Heart right ventricle (tissue), 16 donors: ENCODE measurements at regions of chr1 and their contacts with region 1.

Region 1: GRCh38 chr1:3410142-3410925 is 44.1 kb upstream of the ARHGEF16 start:
- DNase-seq: peak; percentile 58 to 65
- ATAC-seq: peak; percentile 65 to 88 (median 82)
- H3K4me3 ChIP-seq: no peak overlapping the region
- H3K27ac ChIP-seq: no peak overlapping the region
- H3K4me1 ChIP-seq: peaks cover 3 to 30% (median 8%) of the 10 kb centered on the region in 9 donors
- H3K27me3 ChIP-seq: no peaks in the 10 kb centered on the region
- CTCF ChIP-seq: peak; percentile 54 to 80 (median 75)

Region 2: DNA sequence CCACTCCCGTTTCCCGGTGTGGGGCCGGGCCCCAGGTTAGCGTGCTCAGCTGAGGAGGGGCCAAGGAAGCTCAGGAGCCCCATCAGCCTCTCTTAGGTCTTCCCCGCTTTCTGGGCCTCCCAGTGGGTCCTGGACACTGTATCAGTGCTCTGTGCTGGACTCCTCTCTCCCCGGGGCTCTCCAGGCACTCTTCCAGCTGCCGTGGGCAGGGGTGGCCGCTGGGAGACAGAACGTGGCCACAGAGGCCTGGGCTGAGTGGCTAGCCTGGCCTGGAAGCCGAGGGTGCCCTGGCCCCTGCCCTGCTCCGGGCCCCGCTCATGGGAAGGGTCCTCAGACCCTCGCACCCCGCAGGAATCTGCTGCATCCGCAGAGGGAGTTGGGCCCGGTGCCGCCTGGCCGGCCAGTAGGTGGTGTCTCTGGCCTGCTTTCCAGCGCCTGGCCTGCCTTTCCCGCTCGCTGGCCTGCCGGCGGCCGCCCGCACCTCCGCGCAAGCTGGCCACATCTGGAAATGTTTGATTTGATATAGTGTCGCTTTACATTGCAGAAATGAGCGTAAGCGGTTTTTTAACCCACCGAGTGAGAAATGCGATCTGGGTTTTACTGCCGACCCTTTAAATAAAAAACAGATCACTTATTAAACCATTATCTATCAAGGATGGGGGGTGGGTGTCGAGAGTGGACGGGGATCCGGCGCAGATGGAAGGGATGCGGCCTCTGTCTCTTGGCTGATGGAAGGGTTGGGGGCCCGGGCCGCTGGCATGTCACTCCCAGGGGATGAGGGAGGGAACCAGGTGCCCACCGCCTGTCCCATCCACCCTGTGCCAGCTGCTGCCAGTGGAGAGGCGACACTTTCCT is 534.4 kb before region 1 on chr1:
- intact Hi-C with region 1: loop called in 1 of 10 experiments (anchors 5 kb)
- DNase-seq: peak in 1 of 2 donors; percentile 45
- ATAC-seq: peak in 6 of 8 donors; percentile 23 to 67 (median 50)
- H3K4me3 ChIP-seq: no peak overlapping the region
- H3K27ac ChIP-seq: no peak overlapping the region
- H3K4me1 ChIP-seq: peaks cover 0 to 14% (median 0%) of the 10 kb centered on the region in 9 donors
- H3K27me3 ChIP-seq: peaks cover 0 to 62% (median 14%) of the 10 kb centered on the region in 7 donors
- CTCF ChIP-seq: peak in 8 of 9 donors; percentile 24 to 65 (median 50)

Region 3: DNA sequence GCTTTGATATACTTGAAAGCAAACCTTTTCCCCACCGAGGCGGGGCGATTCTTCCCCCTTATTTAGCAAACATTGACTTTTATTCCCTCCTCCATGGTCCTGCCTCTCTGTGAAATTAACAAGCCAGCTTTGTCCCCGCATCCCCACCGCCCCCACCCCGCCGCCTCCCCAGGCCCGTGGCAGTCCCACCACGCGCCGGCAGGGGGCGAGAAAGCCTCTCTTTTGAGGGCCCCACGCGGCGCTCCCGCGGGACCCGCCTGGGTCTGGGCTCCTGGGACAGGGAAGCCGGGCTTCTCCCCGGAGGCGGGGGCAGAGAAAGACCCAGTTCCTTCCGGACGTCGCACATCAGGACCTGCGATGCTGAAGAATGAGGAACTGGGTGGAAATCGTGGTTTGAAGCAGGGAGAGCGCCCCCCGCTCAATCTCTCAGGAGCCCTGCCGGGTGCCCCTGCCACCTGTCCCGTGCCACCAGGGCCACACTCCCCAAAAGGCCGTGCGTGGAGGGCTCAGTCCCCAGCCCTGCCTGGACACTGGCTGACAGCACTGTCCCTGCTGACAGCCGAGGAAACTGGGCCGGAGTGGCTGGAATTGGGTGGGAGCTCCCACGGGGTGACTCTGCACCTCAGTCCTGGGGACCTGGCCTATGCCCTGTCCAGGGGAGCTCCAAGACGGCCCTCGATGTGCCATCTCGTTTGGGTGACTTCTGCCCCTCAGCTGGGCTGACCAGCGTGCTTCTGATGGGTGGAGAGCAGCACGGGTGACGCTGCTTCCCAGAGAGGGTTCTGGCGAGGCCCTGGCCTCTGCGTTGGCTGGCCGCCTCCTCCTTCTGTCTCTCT is 397.7 kb before region 1 on chr1:
- intact Hi-C with region 1: loop called in 1 of 10 experiments (anchors 5 kb)
- DNase-seq: peak; percentile 41 to 73
- ATAC-seq: peak; percentile 58 to 85 (median 82)
- H3K4me3 ChIP-seq: no peak overlapping the region
- H3K27ac ChIP-seq: no peak overlapping the region
- H3K4me1 ChIP-seq: peaks cover 0 to 13% (median 2%) of the 10 kb centered on the region in 9 donors
- H3K27me3 ChIP-seq: peaks cover 3 to 72% (median 45%) of the 10 kb centered on the region in 7 donors
- CTCF ChIP-seq: peak; percentile 76 to 90 (median 81)

Region 4: GRCh38 chr1:3060601-3061551 is 349.5 kb before region 1 on chr1:
- intact Hi-C with region 1: loop called in 7 of 10 experiments (anchors 1 to 10 kb)
- DNase-seq: no peak
- ATAC-seq: peak in 1 of 8 donors; percentile 5
- H3K4me3 ChIP-seq: no peak overlapping the region
- H3K27ac ChIP-seq: no peak overlapping the region
- H3K4me1 ChIP-seq: peaks cover 0 to 39% (median 15%) of the 10 kb centered on the region in 9 donors
- H3K27me3 ChIP-seq: peaks cover 5 to 52% (median 44%) of the 10 kb centered on the region in 7 donors
- CTCF ChIP-seq: no peak

Region 5: DNA sequence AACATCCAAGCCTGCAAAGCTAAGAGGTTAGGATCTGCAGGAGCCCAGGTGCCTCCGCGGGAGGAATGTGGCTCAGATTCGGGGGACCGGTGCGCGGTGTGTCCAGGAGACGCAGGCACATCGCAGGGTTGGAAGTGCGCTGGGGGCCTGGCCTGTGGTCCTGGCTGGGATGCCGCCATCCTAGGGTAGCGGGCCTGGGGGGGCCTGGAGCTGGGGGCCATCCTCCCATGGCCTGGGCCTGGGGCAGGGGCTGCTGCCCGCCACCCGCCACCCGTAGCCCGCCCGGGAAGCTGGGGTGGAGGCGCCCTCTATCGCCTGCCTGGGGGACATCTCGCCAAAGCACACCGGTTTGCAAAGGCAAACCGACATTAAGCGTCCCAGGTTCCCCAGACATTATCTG is 126.5 kb before region 1 on chr1:
- intact Hi-C with region 1: loop called in 1 of 10 experiments (anchors 10 kb)
- DNase-seq: peak; percentile 53 to 62
- ATAC-seq: peak; percentile 60 to 89 (median 74)
- H3K4me3 ChIP-seq: peak overlapping the region in 5 of 10 donors; percentile 3 to 30 (median 20)
- H3K27ac ChIP-seq: peak overlapping the region in 8 of 10 donors; percentile 44 to 75 (median 55)
- H3K4me1 ChIP-seq: peaks cover 0 to 24% (median 13%) of the 10 kb centered on the region in 9 donors
- H3K27me3 ChIP-seq: peaks cover 0 to 35% (median 15%) of the 10 kb centered on the region in 7 donors
- CTCF ChIP-seq: peak; percentile 46 to 89 (median 74)

Region 6: GRCh38 chr1:3352299-3352951 is 57.9 kb before region 1 on chr1:
- intact Hi-C with region 1: loop called in 1 of 10 experiments (anchors 5 kb)
- DNase-seq: no peak
- ATAC-seq: peak in 4 of 8 donors; percentile 6 to 40 (median 18)
- H3K4me3 ChIP-seq: peak overlapping the region in 1 of 10 donors; percentile 5
- H3K27ac ChIP-seq: peak overlapping the region; percentile 69 to 98 (median 88)
- H3K4me1 ChIP-seq: peaks cover 25 to 96% (median 59%) of the 10 kb centered on the region in 9 donors
- H3K27me3 ChIP-seq: peaks cover 0 to 56% (median 14%) of the 10 kb centered on the region in 7 donors
- CTCF ChIP-seq: no peak

Region 7: DNA sequence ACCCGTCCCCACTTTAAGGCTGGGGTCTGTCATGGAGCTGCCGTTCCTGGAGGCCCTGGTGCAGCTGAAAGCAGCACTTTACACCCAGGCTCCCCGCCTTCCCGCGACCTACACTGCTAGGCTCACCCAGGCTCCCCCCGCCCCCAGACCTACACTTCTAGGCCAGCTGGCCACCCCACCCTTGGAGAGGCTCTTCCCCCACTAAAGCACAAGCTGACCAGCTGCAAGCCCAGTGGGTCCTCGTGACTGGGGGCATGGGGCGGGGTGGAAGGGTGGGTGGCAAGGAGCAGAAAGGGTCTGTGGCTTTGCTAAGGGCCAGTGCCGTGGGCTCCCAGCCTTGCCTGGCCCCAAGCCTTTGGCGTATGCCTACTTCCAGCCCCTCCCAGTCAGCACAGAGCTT is 34.4 kb after region 1 on chr1:
- intact Hi-C with region 1: no loop called
- DNase-seq: peak in 1 of 2 donors; percentile 3
- ATAC-seq: no peak
- H3K4me3 ChIP-seq: no peak overlapping the region
- H3K27ac ChIP-seq: no peak overlapping the region
- H3K4me1 ChIP-seq: no peaks in the 10 kb centered on the region
- H3K27me3 ChIP-seq: peaks cover 0 to 53% (median 44%) of the 10 kb centered on the region in 7 donors
- CTCF ChIP-seq: no peak

Region 8: DNA sequence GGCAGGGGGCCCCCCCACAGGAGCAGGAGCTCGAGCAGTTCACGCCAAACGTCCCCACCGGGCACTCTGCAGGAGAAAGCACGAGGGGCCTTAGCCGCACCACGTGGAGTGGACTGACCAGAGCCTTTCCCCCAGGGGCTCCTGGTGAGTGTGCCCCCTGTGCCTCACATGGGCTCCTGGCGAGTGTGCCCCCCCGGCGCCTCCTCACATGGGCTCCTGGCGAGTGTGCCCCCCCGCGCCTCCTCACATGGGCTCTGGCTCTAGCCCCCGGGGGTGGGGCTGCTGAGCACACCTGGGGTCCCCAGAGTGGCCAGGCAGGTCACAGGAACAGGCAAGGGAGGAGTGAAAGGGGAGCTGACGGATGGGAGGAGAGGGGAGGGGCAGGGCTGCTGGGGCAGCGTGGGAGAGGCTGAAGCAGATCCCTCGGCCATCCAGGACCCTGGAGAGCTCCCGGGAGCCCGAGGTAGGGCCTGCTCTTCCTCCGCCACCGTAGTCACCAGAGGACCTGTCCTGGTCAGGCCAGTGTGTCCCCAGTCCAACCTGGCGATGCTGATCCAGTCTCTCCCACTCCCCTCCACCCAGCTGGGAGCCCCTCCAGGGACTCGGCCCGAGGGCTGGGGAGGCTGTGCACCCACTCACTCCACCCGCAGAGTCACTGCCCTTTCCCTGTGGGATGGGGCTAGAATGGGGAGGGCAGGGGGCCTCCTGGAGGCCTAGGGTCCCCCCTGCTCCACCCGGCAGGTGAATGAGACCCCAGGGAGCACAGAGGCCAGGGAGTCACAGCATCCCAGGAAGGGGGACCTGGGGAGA is 91.7 kb after region 1 on chr1:
- intact Hi-C with region 1: no loop called
- DNase-seq: peak; percentile 29 to 71
- ATAC-seq: peak; percentile 29 to 87 (median 69)
- H3K4me3 ChIP-seq: no peak overlapping the region
- H3K27ac ChIP-seq: no peak overlapping the region
- H3K4me1 ChIP-seq: no peaks in the 10 kb centered on the region
- H3K27me3 ChIP-seq: no peaks in the 10 kb centered on the region
- CTCF ChIP-seq: no peak